ENCODE measurements at regions of chr13 and their contacts with region 1.

Region 1: DNA sequence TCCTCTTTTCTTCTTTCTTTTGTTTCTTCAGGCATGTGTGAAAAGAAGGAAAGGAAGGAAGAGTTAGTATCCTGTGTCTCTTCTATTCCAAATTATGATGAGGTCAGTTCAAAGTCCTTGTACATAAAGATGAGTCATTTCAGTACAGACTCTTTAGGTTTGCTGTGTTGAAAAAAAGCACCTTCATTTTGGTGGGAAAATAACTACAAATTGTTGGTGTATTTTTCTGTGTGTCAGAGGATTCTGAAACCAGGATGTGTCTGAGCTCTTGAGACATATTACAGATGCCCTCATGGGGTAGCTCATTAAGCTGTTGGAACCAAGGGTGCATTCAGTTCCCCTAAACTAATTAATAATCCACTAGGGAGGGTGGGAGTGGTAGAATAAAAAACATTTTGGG is 5.8 kb upstream of the HSPH1 start:
- DNase-seq: no peak
- H3K4me3 ChIP-seq: no peak overlapping the region
- H3K27ac ChIP-seq: no peak overlapping the region
- H3K4me1 ChIP-seq: peaks cover 0 to 7% of the 10 kb centered on the region in 2 donors
- H3K27me3 ChIP-seq: no peaks in the 10 kb centered on the region
- CTCF ChIP-seq: no peak
- POLR2A ChIP-seq: no peak

Region 2: GRCh38 chr13:31209172-31209840 is 41.8 kb after region 1 on chr13:
- intact Hi-C with region 1: loop called (anchors 5 kb)
- DNase-seq: peak; percentile 61 to 66
- H3K4me3 ChIP-seq: no peak overlapping the region
- H3K27ac ChIP-seq: peak overlapping the region; percentile 2 to 13 (median 3)
- H3K4me1 ChIP-seq: peaks cover 19 to 27% of the 10 kb centered on the region in 2 donors
- H3K27me3 ChIP-seq: no peaks in the 10 kb centered on the region
- CTCF ChIP-seq: no peak
- POLR2A ChIP-seq: no peak

Measured in thyroid gland (tissue), 4 donors.